ENCODE measurements at regions of chr13 and their contacts with region 1.

Region 1: GRCh38 chr13:83819611-83820010 is 62.7 kb downstream of the SLITRK1 start:
- DNase-seq: no peak
- ATAC-seq: no peak
- H3K4me3 ChIP-seq: no peak overlapping the region
- H3K27ac ChIP-seq: no peak overlapping the region
- H3K4me1 ChIP-seq: no peaks in the 10 kb centered on the region
- H3K27me3 ChIP-seq: no peaks in the 10 kb centered on the region
- CTCF ChIP-seq: no peak
- POLR2A ChIP-seq: no peak
- RAD21 ChIP-seq: no peak

Region 2: DNA sequence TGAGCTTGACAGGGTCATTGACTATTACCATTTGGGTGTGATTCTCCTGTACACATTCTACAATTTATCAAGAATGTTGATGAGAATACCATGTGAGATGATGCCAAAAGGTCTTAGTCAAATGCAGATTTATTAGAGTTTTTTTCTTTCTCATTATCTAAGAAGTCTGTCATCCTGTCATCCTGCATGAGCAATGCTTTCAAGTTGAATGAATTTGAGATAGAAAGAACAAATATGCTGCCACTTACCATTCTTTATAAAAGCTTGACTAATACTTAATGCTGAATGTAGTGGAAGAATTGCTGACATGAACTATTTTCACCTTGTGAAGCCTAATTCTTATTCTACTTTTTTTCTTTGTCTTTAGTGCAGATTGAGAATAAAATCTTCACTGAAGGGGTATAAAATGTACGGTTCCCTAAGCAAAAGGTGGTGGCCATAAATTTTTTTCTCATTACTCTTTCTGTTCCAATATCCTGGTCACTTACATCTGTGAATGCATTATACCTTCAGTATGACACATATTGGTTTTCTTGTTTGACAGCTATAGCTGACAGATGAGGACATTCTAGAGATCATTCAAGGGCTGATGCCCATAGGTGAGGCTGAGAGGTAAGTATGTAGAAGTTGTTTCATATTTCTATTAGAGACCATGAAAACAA is 1372.1 kb before region 1 on chr13:
- CTCF ChIA-PET with region 1: no interaction called
- POLR2A ChIA-PET with region 1: no interaction called
- RAD21 ChIA-PET with region 1: no interaction called
- intact Hi-C with region 1: loop called (anchors 5 kb)
- DNase-seq: no peak
- ATAC-seq: no peak
- H3K4me3 ChIP-seq: no peak overlapping the region
- H3K27ac ChIP-seq: no peak overlapping the region
- H3K4me1 ChIP-seq: no peaks in the 10 kb centered on the region
- H3K27me3 ChIP-seq: no peaks in the 10 kb centered on the region
- CTCF ChIP-seq: no peak
- POLR2A ChIP-seq: no peak
- RAD21 ChIP-seq: no peak

Region 3: GRCh38 chr13:84525865-84526264 is 706.3 kb after region 1 on chr13:
- CTCF ChIA-PET with region 1: no interaction called
- POLR2A ChIA-PET with region 1: no interaction called
- RAD21 ChIA-PET with region 1: no interaction called
- intact Hi-C with region 1: no loop called
- DNase-seq: no peak
- ATAC-seq: no peak
- H3K4me3 ChIP-seq: no peak overlapping the region
- H3K27ac ChIP-seq: no peak overlapping the region
- H3K4me1 ChIP-seq: no peaks in the 10 kb centered on the region
- H3K27me3 ChIP-seq: no peaks in the 10 kb centered on the region
- CTCF ChIP-seq: no peak
- POLR2A ChIP-seq: no peak
- RAD21 ChIP-seq: no peak